ENCODE measurements at regions of chr19 and their contacts with region 1.

Region 1: DNA sequence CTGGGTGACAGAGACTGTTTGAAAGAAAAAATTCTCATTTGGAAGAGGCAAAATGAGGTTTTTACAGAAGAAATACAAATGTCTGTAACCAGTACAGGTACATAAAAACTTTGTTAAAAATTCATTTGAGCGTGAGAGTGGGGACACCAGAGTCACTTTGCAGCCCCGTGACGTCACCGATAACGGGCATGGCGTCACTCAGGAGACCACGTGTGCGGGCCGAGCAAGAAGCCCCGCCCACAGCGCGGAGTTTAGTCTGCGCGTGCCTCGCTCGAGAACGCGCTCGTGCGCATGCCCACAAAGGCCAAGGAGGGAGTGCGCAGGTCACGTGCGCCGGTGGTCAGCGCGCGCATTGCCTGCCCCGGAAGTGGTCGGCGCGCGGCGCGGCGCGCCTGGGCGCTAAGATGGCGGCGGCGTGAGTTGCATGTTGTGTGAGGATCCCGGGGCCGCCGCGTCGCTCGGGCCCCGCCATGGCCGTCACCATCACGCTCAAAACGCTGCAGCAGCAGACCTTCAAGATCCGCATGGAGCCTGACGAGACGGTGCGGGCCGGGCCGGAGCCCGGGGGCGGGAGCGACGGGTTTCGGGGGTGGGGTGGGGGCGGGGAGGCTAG is at the start of gene RAD23A:
- DNase-seq: peak; percentile 96 to 99
- H3K4me3 ChIP-seq: peak within 1 kb of the TSS; percentile 77 to 93 (median 90)
- H3K27ac ChIP-seq: peak within 1 kb of the TSS; percentile 96
- H3K4me1 ChIP-seq: peaks cover 0 to 3% (median under 1%) of the 10 kb centered on the region in 4 experiments; a peak in 1 of 7 replicates
- H3K27me3 ChIP-seq: no peaks in the 10 kb centered on the region
- CTCF ChIP-seq: peak in 1 of 3 experiments; percentile 2; a peak in 1 of 4 replicates
- EP300 ChIP-seq: no peak
- POLR2A ChIP-seq: peak; percentile 98
- RAD21 ChIP-seq: no peak
- total RNA-seq, gene RAD23A: 73.3 and 76.1 TPM in 2 replicates

Region 2: GRCh38 chr19:12859546-12859945 is 86.0 kb before region 1 on chr19:
- CTCF ChIA-PET with region 1: no interaction called
- POLR2A ChIA-PET with region 1: no interaction called
- DNase-seq: no peak
- H3K4me3 ChIP-seq: no peak overlapping the region
- H3K27ac ChIP-seq: no peak overlapping the region
- H3K4me1 ChIP-seq: no peaks in the 10 kb centered on the region
- H3K27me3 ChIP-seq: no peaks in the 10 kb centered on the region
- CTCF ChIP-seq: no peak
- EP300 ChIP-seq: no peak
- POLR2A ChIP-seq: no peak
- RAD21 ChIP-seq: no peak

Region 3: DNA sequence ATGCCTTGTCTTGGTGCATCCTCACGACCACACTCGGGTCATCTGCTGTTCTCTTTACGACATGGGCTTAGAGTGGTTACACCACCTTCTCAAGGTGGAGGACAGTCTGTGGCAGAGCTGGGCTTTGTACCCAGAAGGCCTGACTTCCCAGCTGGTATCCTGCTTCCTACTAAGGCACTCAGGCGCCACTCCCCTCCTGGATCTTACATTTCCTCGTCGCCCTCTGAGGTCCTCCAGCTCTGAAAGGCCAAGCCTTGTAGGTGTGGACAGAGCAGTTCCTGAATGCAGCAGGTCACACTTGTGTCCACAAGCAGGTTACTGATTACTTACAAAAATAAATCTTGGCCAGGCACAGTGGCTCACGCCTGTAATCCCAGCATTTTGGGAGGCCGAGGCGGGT is 38.4 kb before region 1 on chr19:
- CTCF ChIA-PET with region 1: no interaction called
- POLR2A ChIA-PET with region 1: interaction called, 11 read pairs
- DNase-seq: no peak
- H3K4me3 ChIP-seq: no peak overlapping the region
- H3K27ac ChIP-seq: no peak overlapping the region
- H3K4me1 ChIP-seq: peaks cover 0 to 1% (median under 1%) of the 10 kb centered on the region in 4 experiments; a peak in 2 of 7 replicates
- H3K27me3 ChIP-seq: no peaks in the 10 kb centered on the region
- CTCF ChIP-seq: no peak
- EP300 ChIP-seq: no peak
- POLR2A ChIP-seq: no peak
- RAD21 ChIP-seq: no peak

Region 4: DNA sequence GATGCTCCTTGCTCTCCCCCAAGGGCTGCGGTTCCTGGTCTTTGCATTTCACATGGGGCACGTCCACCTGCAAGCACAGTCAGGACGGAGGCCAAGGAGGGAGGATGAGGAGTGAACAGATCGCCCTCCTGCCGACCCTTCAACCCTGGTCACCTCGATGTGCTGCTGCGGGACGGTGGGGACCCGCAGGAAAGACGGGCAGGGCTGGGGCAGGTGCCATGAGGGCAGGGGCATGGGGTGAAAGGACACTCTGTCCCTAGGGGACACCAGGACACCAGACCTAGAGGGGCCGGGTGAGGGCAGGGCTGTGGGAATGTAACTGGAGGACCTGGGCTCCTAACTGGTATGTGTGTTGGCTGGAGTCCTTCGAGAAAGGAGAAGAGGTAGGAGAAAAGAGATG is 27.3 kb before region 1 on chr19:
- CTCF ChIA-PET with region 1: no interaction called
- POLR2A ChIA-PET with region 1: interaction called, 11 read pairs
- DNase-seq: no peak
- H3K4me3 ChIP-seq: no peak overlapping the region
- H3K27ac ChIP-seq: no peak overlapping the region
- H3K4me1 ChIP-seq: peaks cover 5 to 9% (median 7%) of the 10 kb centered on the region in 4 experiments; a peak in 6 of 7 replicates
- H3K27me3 ChIP-seq: peaks cover 6 to 12% (median 11%) of the 10 kb centered on the region in 4 experiments
- CTCF ChIP-seq: no peak
- EP300 ChIP-seq: no peak
- POLR2A ChIP-seq: no peak
- RAD21 ChIP-seq: no peak

Region 5: DNA sequence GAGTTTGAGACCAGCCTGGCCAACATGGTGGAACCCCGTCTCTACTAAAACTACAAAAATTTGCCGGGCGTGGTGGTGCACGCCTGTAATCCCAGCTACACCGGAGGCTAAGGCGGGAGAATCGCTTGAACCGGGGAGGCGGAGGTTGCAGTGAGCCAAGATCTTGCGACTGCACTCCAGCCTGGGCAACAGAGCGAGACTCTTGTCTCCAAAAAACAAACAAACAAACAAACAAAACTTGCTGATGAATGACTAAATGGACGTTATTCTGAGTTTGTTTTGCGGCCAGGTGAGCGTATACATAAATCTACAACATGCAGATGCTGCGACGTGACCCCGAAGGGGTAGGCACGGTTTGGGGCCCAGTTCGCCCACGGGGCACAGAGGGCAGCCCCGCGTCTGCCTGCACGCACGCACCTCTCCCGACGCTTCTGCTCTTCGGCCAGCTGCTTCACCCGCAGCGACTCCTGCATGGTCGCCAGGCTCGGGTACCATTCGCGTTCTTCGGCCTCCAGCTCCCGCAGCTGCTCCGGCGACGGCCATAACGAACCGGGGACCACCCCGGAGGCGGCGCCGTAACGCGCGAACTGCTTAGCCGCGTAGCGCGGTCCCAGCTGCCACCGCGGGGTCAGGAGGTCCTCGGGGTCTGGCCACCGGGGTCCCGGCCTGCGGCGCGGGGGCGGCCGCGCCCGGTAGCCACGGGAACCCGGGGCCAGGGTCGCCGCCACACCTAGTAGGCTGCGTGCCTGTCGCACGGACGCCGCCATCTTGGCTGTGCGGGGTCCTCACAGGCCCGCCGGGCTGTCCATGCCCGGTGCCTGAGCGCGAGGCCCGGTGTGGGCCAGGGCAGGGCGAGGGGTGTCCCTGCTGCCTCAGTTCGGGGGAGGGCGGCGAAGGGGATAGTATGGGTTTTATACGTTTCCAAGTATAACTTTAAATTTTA is 11.1 kb after region 1 on chr19 and contains the start of gene GADD45GIP1:
- CTCF ChIA-PET with region 1: no interaction called
- POLR2A ChIA-PET with region 1: interaction called, 67 read pairs
- DNase-seq: peak; percentile 38 to 89
- H3K4me3 ChIP-seq: peak within 1 kb of the TSS; percentile 82 to 91 (median 88)
- H3K27ac ChIP-seq: peak within 1 kb of the TSS; percentile 94
- H3K4me1 ChIP-seq: peaks cover 0 to 4% (median 2%) of the 10 kb centered on the region in 4 experiments; a peak in 3 of 7 replicates
- H3K27me3 ChIP-seq: no peaks in the 10 kb centered on the region
- CTCF ChIP-seq: no peak
- EP300 ChIP-seq: no peak
- POLR2A ChIP-seq: peak; percentile 96 to 97
- RAD21 ChIP-seq: no peak
- total RNA-seq, gene GADD45GIP1: 42.2 and 45.5 TPM in 2 replicates

Region 6: GRCh38 chr19:13033819-13034611 is 88.4 kb after region 1 on chr19:
- CTCF ChIA-PET with region 1: no interaction called
- POLR2A ChIA-PET with region 1: no interaction called
- DNase-seq: peak in 1 of 2 experiments; percentile 86
- H3K4me3 ChIP-seq: no peak overlapping the region
- H3K27ac ChIP-seq: no peak overlapping the region
- H3K4me1 ChIP-seq: no peaks in the 10 kb centered on the region
- H3K27me3 ChIP-seq: peaks cover 10 to 67% (median 42%) of the 10 kb centered on the region in 4 experiments
- CTCF ChIP-seq: peak; percentile 86 to 95 (median 93)
- EP300 ChIP-seq: no peak
- POLR2A ChIP-seq: no peak
- RAD21 ChIP-seq: peak; percentile 59 to 74; a peak in 3 of 4 replicates